ENCODE measurements at regions of chr17 and their contacts with region 1.

Region 1: GRCh38 chr17:49407981-49408501 is 6.6 kb downstream of the PHB1 start:
- DNase-seq: peak; percentile 82 to 97
- ATAC-seq: peak; percentile 96 to 98
- H3K4me3 ChIP-seq: no peak overlapping the region
- H3K27ac ChIP-seq: no peak overlapping the region
- H3K4me1 ChIP-seq: peaks cover 8% of the 10 kb centered on the region; the same call in 2 of the 3 replicates
- CTCF ChIP-seq: peak; percentile 100
- EP300 ChIP-seq: no peak
- POLR2A ChIP-seq: no peak
- RAD21 ChIP-seq: peak; percentile 83 to 87

Region 2: DNA sequence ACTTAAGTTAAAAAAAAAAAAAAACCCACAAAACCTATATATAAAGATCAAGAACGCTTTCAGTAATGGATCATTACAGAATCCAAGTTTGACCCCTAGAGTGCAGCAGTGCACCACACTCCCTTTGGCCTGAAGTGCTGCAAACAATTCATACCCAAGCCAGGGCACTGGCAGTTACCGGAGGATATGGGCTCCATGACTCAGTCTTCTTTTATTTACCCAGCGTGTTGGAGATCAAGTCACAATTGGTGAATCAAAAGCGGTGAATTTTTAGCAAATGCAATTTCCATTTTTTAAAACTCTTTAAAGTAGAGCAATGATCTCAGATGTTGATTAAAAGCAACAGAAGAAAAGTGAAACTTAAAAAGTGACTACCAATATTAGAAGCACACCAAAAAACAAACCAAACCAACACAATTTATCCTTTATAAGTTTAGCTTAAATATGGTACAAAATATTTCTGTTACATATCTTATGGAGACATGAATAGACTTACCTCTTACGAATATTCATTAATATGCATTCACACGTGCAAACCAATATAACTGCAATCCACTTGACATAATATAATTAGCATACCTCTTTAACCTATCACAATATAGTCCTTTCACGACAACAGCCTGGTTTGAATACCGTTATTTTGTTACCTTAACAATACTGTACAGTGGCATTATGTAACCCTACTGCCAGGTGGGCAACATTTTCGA is 92.3 kb before region 1 on chr17:
- CTCF ChIA-PET with region 1: interaction called, 42 read pairs
- POLR2A ChIA-PET with region 1: no interaction called
- DNase-seq: peak; percentile 91 to 97
- ATAC-seq: peak; percentile 99
- H3K4me3 ChIP-seq: no peak overlapping the region; the same call in 2 of the 3 replicates
- H3K27ac ChIP-seq: peak overlapping the region; percentile 8 to 56; a peak in 4 of 6 replicates
- H3K4me1 ChIP-seq: peaks cover 13% of the 10 kb centered on the region
- CTCF ChIP-seq: peak; percentile 99
- EP300 ChIP-seq: no peak
- POLR2A ChIP-seq: no peak
- RAD21 ChIP-seq: peak; percentile 99 to 100

Region 3: DNA sequence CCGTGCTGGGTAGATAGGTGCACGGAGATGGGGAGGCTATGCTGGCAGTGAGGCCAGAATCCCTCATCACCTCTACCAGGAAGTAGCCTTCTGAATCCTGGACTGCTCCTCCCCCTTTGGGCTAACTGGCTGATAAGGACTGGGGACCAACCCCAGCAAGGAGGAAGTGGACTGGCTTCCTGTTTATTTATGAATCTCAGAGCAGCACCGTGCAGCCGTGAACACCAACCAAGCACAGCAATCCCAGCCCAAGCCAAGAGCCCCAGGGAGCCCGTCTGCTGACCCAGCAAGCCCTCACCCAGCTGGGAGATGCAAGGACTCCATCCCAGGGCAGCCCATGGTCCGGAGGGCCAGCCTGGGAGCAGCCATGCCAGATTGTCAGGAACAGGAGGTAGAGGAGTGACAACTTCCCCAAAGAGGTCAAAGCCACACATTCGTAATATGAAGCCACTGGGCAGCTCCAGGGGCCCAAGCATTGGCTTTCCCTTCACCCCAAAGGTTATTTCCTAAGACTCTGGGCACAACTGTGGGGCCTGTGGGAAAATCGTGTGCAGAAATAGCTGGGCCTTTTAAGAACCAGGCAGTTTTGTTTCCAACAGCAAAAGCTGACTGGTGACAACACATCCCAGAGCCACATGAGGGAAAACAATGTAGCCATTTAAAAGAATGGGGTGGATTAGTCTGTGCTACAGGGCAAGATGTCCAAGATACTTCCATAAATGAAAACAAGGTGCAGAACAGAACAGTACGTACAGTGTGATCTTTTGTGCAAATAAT is 17.3 kb before region 1 on chr17:
- CTCF ChIA-PET with region 1: interaction called, 147 read pairs
- POLR2A ChIA-PET with region 1: no interaction called
- DNase-seq: no peak
- ATAC-seq: no peak
- H3K4me3 ChIP-seq: no peak overlapping the region
- H3K27ac ChIP-seq: peak overlapping the region; percentile 11 to 29; a peak in 1 of 6 replicates
- H3K4me1 ChIP-seq: peaks cover 10% of the 10 kb centered on the region; the same call in 1 of the 3 replicates
- CTCF ChIP-seq: no peak
- EP300 ChIP-seq: no peak
- POLR2A ChIP-seq: no peak
- RAD21 ChIP-seq: no peak

Region 4: GRCh38 chr17:49434821-49435670 is 27.0 kb after region 1 on chr17:
- CTCF ChIA-PET with region 1: interaction called, 13 read pairs
- POLR2A ChIA-PET with region 1: no interaction called
- DNase-seq: peak; percentile 73 to 95
- ATAC-seq: peak; percentile 72 to 91
- H3K4me3 ChIP-seq: no peak overlapping the region
- H3K27ac ChIP-seq: no peak overlapping the region
- H3K4me1 ChIP-seq: no peaks in the 10 kb centered on the region
- CTCF ChIP-seq: peak; percentile 83
- EP300 ChIP-seq: no peak
- POLR2A ChIP-seq: no peak
- RAD21 ChIP-seq: peak; percentile 80 to 82

Region 5: GRCh38 chr17:49496183-49496866 is 88.3 kb after region 1 on chr17:
- CTCF ChIA-PET with region 1: interaction called, 30 read pairs
- POLR2A ChIA-PET with region 1: no interaction called
- DNase-seq: peak; percentile 72 to 83
- ATAC-seq: peak; percentile 73 to 92
- H3K4me3 ChIP-seq: peak overlapping the region; percentile 50
- H3K27ac ChIP-seq: peak overlapping the region in 1 of 2 experiments; percentile 47; a peak in 1 of 6 replicates
- H3K4me1 ChIP-seq: peaks cover 22% of the 10 kb centered on the region
- CTCF ChIP-seq: peak; percentile 95
- EP300 ChIP-seq: no peak
- POLR2A ChIP-seq: no peak
- RAD21 ChIP-seq: peak; percentile 39 to 67; a peak in 4 of 5 replicates

Region 6: DNA sequence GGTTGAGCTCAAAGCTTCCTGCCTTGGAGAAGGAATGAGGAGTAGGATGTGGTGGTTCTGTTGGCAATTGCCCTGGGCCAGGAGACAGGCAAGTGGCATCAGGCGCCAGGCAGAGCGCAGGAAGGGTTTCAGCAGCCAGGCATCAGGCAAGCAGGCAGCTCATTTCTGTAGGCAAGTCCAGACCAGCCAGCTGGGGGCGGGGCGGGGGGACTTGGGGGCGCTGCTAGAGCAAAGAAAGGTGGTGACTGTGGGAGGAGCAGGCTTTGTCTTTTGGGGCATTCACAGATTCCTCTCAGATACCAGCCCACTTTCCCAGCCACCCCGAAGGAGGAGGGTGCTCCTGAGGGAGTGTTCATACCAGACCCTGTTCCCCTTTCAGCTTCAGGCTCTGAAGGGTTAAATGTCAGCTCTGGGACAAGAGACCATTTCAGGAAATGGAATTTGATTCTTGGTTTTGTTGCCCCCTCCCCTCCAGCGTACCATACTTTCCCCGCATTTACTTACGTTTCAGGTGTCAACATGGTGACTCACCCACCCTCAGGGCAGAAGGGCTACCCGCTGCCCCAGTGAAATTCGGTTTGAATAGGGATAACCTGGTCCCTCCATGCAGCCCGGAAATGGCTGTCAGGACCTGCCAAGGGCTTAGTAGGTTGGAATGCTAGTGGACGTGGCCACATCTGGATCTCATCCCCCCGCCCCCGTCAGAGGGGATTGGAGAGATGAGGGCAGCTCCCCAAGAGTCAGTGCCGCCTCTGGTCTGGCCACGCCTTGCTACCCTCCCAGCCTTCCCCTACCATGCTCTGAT is 100.2 kb after region 1 on chr17:
- CTCF ChIA-PET with region 1: interaction called, 23 read pairs
- POLR2A ChIA-PET with region 1: no interaction called
- DNase-seq: peak; percentile 62 to 78
- ATAC-seq: peak; percentile 45 to 64; a peak in 4 of 6 replicates
- H3K4me3 ChIP-seq: no peak overlapping the region
- H3K27ac ChIP-seq: peak overlapping the region in 1 of 2 experiments; percentile 40; a peak in 3 of 6 replicates
- H3K4me1 ChIP-seq: peaks cover 13% of the 10 kb centered on the region
- CTCF ChIP-seq: no peak
- EP300 ChIP-seq: no peak
- POLR2A ChIP-seq: no peak
- RAD21 ChIP-seq: no peak

Region 7: GRCh38 chr17:49523706-49524472 is 115.8 kb after region 1 on chr17:
- CTCF ChIA-PET with region 1: interaction called, 13 read pairs
- POLR2A ChIA-PET with region 1: no interaction called
- DNase-seq: no peak
- ATAC-seq: no peak
- H3K4me3 ChIP-seq: no peak overlapping the region
- H3K27ac ChIP-seq: no peak overlapping the region
- H3K4me1 ChIP-seq: no peaks in the 10 kb centered on the region
- CTCF ChIP-seq: no peak
- EP300 ChIP-seq: no peak
- POLR2A ChIP-seq: no peak
- RAD21 ChIP-seq: no peak